PC-3 (cell line): ENCODE measurements at regions of chr14 and their contacts with region 1.

Region 1: DNA sequence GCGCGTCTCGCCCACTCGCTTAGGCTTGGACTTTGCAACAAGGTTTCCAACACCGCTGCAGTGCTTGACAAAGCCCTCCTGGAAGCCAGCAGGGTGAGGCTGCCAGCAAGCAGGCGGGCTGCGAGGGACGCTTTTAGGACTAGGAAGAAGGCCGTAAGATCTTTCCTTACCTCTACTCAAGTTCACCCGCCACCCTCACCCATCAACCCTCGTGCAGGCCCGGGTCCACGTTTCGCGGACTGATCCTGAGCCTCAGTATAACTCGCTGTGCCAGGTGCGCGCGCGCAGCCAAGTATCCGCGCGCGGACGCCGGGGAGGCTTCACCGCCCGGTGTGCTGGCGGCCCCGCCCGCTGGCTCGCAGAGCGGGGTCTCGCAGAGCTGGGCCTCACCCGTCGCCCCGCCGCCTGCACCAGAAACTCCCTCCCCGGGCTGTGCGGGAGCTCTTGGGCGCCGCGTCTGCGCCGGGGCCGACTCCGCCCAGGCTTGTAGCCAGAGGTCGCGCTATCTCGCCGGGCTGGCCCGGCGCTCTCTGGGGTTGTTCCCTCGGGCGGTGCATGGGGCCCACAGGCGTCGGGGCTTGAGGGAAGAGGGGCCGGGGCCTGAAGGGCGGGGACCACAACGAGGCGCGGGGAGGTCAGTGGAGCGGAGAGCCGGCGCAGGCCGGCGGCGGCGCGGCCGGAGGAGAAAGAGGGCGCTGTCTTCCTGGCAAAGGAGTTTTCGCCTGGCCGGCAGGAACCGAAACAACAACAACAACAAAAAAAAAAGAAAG is 7.6 kb upstream of the SIX1 start:
- DNase-seq: peak; percentile 76
- ATAC-seq: peak; percentile 59
- H3K4me3 ChIP-seq: peak overlapping the region; percentile 80
- H3K27ac ChIP-seq: peak overlapping the region; percentile 19
- H3K4me1 ChIP-seq: peaks cover 31% of the 10 kb centered on the region
- H3K27me3 ChIP-seq: no peaks in the 10 kb centered on the region
- CTCF ChIP-seq: peak; percentile 83

Region 2: DNA sequence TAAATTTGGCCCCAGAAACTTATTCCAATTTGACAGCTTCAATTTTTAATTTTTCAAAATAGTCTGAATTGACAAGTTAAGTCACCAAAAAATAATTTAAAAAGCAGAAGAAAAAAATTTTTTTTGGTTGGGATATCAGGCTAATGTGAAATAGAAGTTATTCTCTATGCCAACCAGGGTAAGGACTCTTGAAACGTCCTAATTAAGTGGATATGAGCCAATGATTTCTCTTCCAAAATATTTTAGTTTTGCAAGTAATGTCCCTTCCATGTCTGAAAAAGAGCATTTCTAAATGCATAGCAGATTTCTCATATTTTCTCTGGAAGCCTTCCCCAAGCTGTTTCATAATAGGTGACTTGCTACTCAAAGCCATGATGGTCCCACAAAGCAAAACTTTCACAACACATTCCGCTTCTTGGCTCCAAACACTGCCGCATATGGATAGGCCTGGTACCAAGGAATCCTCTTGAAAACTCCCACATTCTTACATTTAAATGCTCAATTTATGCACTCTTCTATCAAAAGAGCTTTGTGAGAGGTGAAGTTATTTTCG is 82.9 kb before region 1 on chr14:
- CTCF ChIA-PET with region 1: no interaction called
- POLR2A ChIA-PET with region 1: no interaction called
- intact Hi-C with region 1: no loop called
- DNase-seq: no peak
- ATAC-seq: no peak
- H3K4me3 ChIP-seq: no peak overlapping the region
- H3K27ac ChIP-seq: no peak overlapping the region
- H3K4me1 ChIP-seq: no peaks in the 10 kb centered on the region
- H3K27me3 ChIP-seq: no peaks in the 10 kb centered on the region
- CTCF ChIP-seq: no peak

Region 3: GRCh38 chr14:60670989-60671388 is 14.1 kb after region 1 on chr14:
- CTCF ChIA-PET with region 1: no interaction called
- POLR2A ChIA-PET with region 1: no interaction called
- intact Hi-C with region 1: no loop called
- DNase-seq: no peak
- ATAC-seq: no peak
- H3K4me3 ChIP-seq: no peak overlapping the region
- H3K27ac ChIP-seq: no peak overlapping the region
- H3K4me1 ChIP-seq: no peaks in the 10 kb centered on the region
- H3K27me3 ChIP-seq: no peaks in the 10 kb centered on the region
- CTCF ChIP-seq: no peak

Region 4: GRCh38 chr14:60862286-60862685 is 205.4 kb after region 1 on chr14:
- CTCF ChIA-PET with region 1: interaction called, 3 read pairs
- POLR2A ChIA-PET with region 1: interaction called, 4 read pairs
- intact Hi-C with region 1: loop called (anchors 5 kb)
- DNase-seq: peak; percentile 92
- ATAC-seq: peak; percentile 57
- H3K4me3 ChIP-seq: no peak overlapping the region
- H3K27ac ChIP-seq: no peak overlapping the region
- H3K4me1 ChIP-seq: peaks cover 20% of the 10 kb centered on the region
- H3K27me3 ChIP-seq: no peaks in the 10 kb centered on the region
- CTCF ChIP-seq: no peak

Region 5: DNA sequence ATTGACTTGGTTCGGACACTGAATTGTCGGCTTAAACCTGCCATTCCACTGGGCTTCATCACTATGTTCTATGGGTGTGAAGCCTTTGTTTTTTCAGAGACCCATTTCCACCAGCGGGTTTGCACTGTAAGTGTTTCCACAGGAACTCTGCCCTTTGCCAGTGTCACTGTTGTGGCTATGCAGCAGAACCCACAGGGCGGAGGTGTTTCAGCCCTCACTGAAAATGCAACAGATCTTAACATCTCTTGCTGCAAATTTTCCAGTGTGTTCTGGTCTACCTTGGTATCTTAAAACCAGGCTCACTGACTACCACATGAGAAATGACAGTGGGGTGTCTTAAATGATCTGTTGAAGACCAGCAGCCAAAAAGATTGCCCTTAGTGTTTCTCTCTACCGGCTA is 685.6 kb after region 1 on chr14:
- CTCF ChIA-PET with region 1: no interaction called
- POLR2A ChIA-PET with region 1: no interaction called
- intact Hi-C with region 1: no loop called
- DNase-seq: no peak
- ATAC-seq: no peak
- H3K4me3 ChIP-seq: no peak overlapping the region
- H3K27ac ChIP-seq: no peak overlapping the region
- H3K4me1 ChIP-seq: peaks cover 15% of the 10 kb centered on the region
- H3K27me3 ChIP-seq: no peaks in the 10 kb centered on the region
- CTCF ChIP-seq: no peak